Ascending aorta (tissue), 2 donors: ENCODE measurements at regions of chr11 and their contacts with region 1.

Region 1: GRCh38 chr11:130894322-130895025 is 21.8 kb downstream of the SNX19 start:
- DNase-seq: peak in 1 of 2 donors; percentile 88
- H3K4me3 ChIP-seq: no peak overlapping the region
- H3K27ac ChIP-seq: peak overlapping the region; percentile 86 to 93
- H3K4me1 ChIP-seq: peaks cover 27 to 60% of the 10 kb centered on the region in 2 donors
- H3K27me3 ChIP-seq: no peaks in the 10 kb centered on the region
- CTCF ChIP-seq: peak; percentile 80 to 86 (median 81)

Region 2: GRCh38 chr11:130434521-130435223 is 459.8 kb before region 1 on chr11:
- intact Hi-C with region 1: loop called (anchors 1 kb)
- DNase-seq: peak in 1 of 2 donors; percentile 82
- H3K4me3 ChIP-seq: peak overlapping the region; percentile 53 to 71
- H3K27ac ChIP-seq: peak overlapping the region; percentile 64 to 81
- H3K4me1 ChIP-seq: peaks cover 0 to 3% of the 10 kb centered on the region in 2 donors
- H3K27me3 ChIP-seq: no peaks in the 10 kb centered on the region
- CTCF ChIP-seq: peak; percentile 68 to 79 (median 77)

Region 3: DNA sequence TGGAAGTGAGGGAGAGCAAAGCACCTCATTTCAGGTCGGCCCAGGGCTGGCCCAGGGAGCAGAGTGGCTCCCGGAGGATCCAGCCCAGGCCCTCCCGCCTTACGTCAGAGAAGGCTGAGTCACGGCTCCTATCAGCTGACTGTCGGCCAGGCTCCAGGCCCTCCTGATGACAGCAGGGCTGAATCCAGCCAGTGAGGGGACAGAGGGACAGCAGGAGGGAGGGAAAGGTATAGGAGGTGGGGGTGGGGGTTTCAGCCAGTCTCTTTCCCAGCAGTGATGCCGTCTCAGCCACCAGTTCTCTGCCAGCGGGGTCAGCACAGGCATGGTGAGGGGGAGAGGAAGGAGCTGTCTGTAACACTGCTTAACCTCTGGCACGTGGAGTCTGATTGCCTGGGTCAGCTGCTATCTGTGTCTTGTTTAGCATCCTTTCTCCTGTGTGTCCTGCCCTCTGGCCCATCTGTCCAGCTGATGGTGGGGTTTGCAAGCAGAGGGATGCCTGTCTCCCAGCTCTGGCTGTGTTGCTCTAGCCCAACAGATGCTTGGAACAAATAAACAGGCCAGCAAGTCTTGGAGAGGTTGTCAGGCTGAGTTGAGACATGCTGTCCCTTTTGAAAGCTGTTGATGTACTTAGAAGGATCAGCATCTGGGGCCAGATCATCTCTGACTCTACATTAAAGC is 372.1 kb before region 1 on chr11:
- intact Hi-C with region 1: loop called (anchors 5 kb)
- DNase-seq: peak; percentile 81 to 97
- H3K4me3 ChIP-seq: no peak overlapping the region
- H3K27ac ChIP-seq: peak overlapping the region; percentile 76 to 85
- H3K4me1 ChIP-seq: peaks cover 0 to 23% of the 10 kb centered on the region in 2 donors
- H3K27me3 ChIP-seq: no peaks in the 10 kb centered on the region
- CTCF ChIP-seq: no peak

Region 4: GRCh38 chr11:130861902-130862860 is 32.3 kb before region 1 on chr11:
- intact Hi-C with region 1: loop called (anchors 1 kb)
- DNase-seq: peak; percentile 66 to 97
- H3K4me3 ChIP-seq: peak overlapping the region; percentile 34 to 45
- H3K27ac ChIP-seq: peak overlapping the region; percentile 86 to 90
- H3K4me1 ChIP-seq: peaks cover 13 to 41% of the 10 kb centered on the region in 2 donors
- H3K27me3 ChIP-seq: no peaks in the 10 kb centered on the region
- CTCF ChIP-seq: peak; percentile 99 to 100 (median 100)

Region 5: DNA sequence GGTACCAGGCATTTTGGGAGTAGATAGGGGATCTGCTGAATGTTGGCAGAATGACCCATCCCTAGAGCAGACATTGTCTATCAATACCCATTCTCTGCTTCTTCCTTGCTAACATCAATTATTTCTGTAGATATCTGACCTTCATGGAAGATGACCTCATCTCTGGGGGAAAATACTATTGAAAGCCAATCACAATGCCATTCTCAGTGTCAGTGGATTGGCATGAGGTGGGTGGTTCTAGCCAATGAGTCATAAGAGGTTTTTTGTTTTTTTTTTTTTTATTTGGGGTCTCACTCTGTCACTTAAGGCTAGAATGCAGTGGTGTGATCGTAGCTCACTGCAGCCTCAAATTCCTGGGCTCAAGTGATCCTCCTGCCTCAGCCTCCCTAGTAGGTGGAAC is 20.7 kb before region 1 on chr11:
- intact Hi-C with region 1: loop called (anchors 2 kb)
- DNase-seq: no peak
- H3K4me3 ChIP-seq: no peak overlapping the region
- H3K27ac ChIP-seq: peak overlapping the region; percentile 84 to 93
- H3K4me1 ChIP-seq: peaks cover 9 to 30% of the 10 kb centered on the region in 2 donors
- H3K27me3 ChIP-seq: no peaks in the 10 kb centered on the region
- CTCF ChIP-seq: no peak

Region 6: GRCh38 chr11:130916238-130916855 is 21.9 kb after region 1 on chr11 and contains the start of gene SNX19:
- intact Hi-C with region 1: loop called (anchors 1 kb)
- DNase-seq: peak; percentile 52 to 94
- H3K4me3 ChIP-seq: peak within 1 kb of the TSS; percentile 72 to 99
- H3K27ac ChIP-seq: peak within 1 kb of the TSS; percentile 86 to 97
- H3K4me1 ChIP-seq: peaks cover 6 to 11% of the 10 kb centered on the region in 2 donors
- H3K27me3 ChIP-seq: no peaks in the 10 kb centered on the region
- CTCF ChIP-seq: peak; percentile 88 to 96 (median 93)
- total RNA-seq, gene SNX19: 137 TPM

Region 7: GRCh38 chr11:131136486-131136885 is 242.0 kb after region 1 on chr11:
- intact Hi-C with region 1: no loop called
- DNase-seq: no peak
- H3K4me3 ChIP-seq: no peak overlapping the region
- H3K27ac ChIP-seq: no peak overlapping the region
- H3K4me1 ChIP-seq: no peaks in the 10 kb centered on the region
- H3K27me3 ChIP-seq: no peaks in the 10 kb centered on the region
- CTCF ChIP-seq: no peak

Region 8: GRCh38 chr11:131300439-131300717 is 405.9 kb after region 1 on chr11:
- intact Hi-C with region 1: no loop called
- DNase-seq: no peak
- H3K4me3 ChIP-seq: no peak overlapping the region
- H3K27ac ChIP-seq: no peak overlapping the region
- H3K4me1 ChIP-seq: no peaks in the 10 kb centered on the region
- H3K27me3 ChIP-seq: no peaks in the 10 kb centered on the region
- CTCF ChIP-seq: no peak